HepG2 (cell line): ENCODE measurements at regions of chr3 and their contacts with region 1.

Region 1: DNA sequence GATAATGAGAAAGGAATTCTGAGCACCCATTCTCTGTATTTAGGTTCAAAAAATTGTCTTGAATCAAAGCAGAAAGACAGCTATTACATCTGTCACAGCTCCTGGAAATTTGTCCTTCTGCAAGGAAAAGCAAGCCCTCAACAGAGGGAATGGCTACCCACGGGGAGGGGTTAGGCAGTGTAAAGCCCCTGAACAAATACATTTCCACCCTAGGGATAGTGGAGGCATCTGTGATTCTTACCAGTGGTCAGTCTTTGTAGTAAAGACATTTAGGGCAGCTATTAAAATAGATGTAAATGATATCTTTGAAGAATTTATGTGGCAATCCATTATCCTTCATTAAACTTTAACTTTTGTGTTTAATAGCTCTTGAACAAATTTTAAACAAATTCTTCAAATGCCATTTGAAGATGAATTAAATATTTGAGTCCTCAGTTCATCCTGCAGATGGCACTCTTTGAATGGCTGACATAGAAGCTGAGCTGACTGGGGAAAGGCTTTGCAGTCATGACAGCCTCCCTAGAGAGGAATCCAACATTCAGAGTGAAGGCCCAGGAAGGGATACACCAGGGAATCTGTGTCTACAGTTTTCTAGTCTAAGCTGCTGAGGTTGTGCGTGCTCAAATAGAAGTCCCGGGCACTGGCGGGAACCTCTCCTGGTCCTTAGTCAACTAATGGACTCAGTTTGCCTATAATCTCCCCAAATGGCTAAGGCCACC is 359.7 kb upstream of the ROPN1 start:
- DNase-seq: peak; percentile 39
- ATAC-seq: peak; percentile 80
- H3K4me3 ChIP-seq: no peak overlapping the region
- H3K27ac ChIP-seq: no peak overlapping the region
- H3K4me1 ChIP-seq: no peaks in the 10 kb centered on the region
- H3K27me3 ChIP-seq: no peaks in the 10 kb centered on the region
- CTCF ChIP-seq: peak; percentile 61
- EP300 ChIP-seq: no peak
- POLR2A ChIP-seq: no peak
- RAD21 ChIP-seq: no peak

Region 2: DNA sequence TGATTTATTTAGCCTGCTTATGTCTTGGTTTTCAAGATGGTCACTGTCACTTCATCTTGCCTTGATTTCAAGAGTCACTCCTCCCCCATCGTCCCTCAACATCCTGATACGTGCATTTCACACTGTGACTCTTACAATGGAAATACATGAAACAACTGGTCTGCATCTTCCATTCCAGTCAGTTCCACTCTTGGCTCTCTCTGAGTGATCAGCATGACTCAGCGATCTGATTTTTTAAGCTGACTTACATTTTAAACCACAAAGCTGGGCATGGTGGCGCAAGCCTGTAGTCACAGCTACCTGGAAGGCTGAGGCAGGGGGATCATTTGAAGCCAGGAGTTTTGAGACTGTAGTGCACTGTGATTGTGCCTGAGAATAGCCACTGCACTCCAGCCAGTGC is 88.4 kb before region 1 on chr3:
- CTCF ChIA-PET with region 1: no interaction called
- POLR2A ChIA-PET with region 1: no interaction called
- in situ Hi-C with region 1: no loop called
- intact Hi-C with region 1: no loop called
- DNase-seq: no peak
- ATAC-seq: no peak
- H3K4me3 ChIP-seq: no peak overlapping the region
- H3K27ac ChIP-seq: no peak overlapping the region
- H3K4me1 ChIP-seq: peaks cover 8% of the 10 kb centered on the region
- H3K27me3 ChIP-seq: 0 out of 5 replicates have a peak, but pooled peaks cover 0 to 4% of the 10 kb centered on the region in 2 experiments
- CTCF ChIP-seq: no peak
- EP300 ChIP-seq: no peak
- POLR2A ChIP-seq: no peak
- RAD21 ChIP-seq: no peak

Region 3: DNA sequence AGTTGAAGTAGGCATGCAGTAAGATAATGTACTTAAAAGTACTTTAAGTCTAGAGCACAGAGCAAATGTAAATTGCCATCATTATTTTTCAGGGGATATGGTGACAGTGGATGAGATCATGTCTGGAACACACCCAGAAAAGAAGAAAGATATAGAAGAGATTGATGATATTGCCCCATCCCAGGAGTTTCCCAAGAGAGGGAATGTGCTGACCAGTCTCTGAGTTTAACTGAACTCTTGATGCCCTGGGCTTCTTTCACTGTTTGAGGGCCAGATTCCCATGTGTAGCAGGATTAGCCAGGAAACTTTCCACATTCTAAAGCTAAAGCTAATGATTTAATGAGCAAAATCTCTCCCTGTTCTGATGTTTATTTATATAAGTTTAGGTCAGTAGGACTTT is 11.9 kb after region 1 on chr3:
- CTCF ChIA-PET with region 1: no interaction called
- POLR2A ChIA-PET with region 1: no interaction called
- in situ Hi-C with region 1: no loop called
- intact Hi-C with region 1: no loop called
- DNase-seq: no peak
- ATAC-seq: no peak
- H3K4me3 ChIP-seq: no peak overlapping the region
- H3K27ac ChIP-seq: no peak overlapping the region
- H3K4me1 ChIP-seq: no peaks in the 10 kb centered on the region
- H3K27me3 ChIP-seq: no peaks in the 10 kb centered on the region; a peak in 1 of 5 replicates
- CTCF ChIP-seq: no peak
- EP300 ChIP-seq: no peak
- POLR2A ChIP-seq: no peak
- RAD21 ChIP-seq: no peak

Region 4: DNA sequence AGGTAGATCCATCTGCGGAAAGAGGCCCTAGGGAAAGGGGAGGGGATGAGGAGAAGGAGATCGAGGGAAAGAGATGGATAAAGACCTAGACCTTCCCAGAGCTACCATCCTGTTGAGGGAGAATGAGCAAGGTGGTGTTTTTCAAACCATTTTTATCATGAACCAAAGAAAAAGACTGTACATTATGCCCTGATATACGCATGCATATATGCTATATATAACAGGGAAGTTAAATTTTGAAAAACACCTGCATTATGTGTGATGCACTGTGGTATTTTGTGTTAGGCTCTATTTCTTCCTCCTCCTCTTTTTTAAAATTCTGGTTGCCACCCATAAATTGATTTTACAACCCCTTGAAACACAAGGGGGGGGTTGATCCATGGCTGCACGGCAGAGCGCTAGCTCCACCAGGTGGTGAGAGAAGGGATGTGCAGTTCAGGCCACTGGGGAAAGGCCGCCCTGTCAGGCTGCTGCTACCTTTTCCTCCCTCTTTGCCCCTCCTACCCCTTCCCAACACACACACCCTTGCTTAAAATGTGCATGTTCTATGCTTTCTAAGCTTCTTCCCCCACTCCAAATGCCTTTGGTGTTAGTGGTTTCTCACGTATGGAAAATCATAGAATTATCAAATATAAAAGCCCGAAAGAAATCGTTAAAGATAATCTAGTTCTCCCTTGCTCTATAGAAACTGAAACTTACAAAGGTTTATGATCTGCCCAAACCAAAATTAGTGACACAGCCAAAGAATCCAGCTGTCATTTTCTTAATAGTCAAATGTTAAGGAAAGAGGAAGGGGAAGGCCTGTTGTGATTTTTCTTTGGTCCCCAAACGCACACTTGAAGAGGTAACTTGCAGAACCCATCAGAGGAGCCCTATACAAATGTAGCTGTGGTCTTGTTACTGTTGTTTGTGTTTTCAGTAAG is 116.7 kb after region 1 on chr3:
- CTCF ChIA-PET with region 1: interaction called, 17 read pairs
- POLR2A ChIA-PET with region 1: no interaction called
- in situ Hi-C with region 1: loop called (anchors 5 kb)
- intact Hi-C with region 1: loop called (anchors 1 kb)
- DNase-seq: peak; percentile 20
- ATAC-seq: peak; percentile 90
- H3K4me3 ChIP-seq: no peak overlapping the region
- H3K27ac ChIP-seq: no peak overlapping the region
- H3K4me1 ChIP-seq: no peaks in the 10 kb centered on the region
- H3K27me3 ChIP-seq: peaks cover 0 to 5% of the 10 kb centered on the region in 2 experiments; a peak in 1 of 5 replicates
- CTCF ChIP-seq: peak; percentile 89
- EP300 ChIP-seq: no peak
- POLR2A ChIP-seq: no peak
- RAD21 ChIP-seq: peak; percentile 79

Region 5: GRCh38 chr3:124552239-124552638 is 200.7 kb after region 1 on chr3:
- CTCF ChIA-PET with region 1: interaction called, 5 read pairs
- POLR2A ChIA-PET with region 1: no interaction called
- in situ Hi-C with region 1: loop called (anchors 5 kb)
- intact Hi-C with region 1: loop called (anchors 1 kb)
- DNase-seq: peak; percentile 94
- ATAC-seq: peak; percentile 83
- H3K4me3 ChIP-seq: no peak overlapping the region
- H3K27ac ChIP-seq: no peak overlapping the region
- H3K4me1 ChIP-seq: peaks cover 20% of the 10 kb centered on the region
- H3K27me3 ChIP-seq: peaks cover 3 to 33% of the 10 kb centered on the region in 2 experiments; a peak in 4 of 5 replicates
- CTCF ChIP-seq: no peak
- EP300 ChIP-seq: peak in 1 of 2 experiments; percentile 63; a peak in 1 of 4 replicates
- POLR2A ChIP-seq: no peak
- RAD21 ChIP-seq: no peak